Naive thymus-derived CD4-positive, alpha-beta T cell (primary cell): ENCODE measurements at regions of chr10 and their contacts with region 1.

Region 1: DNA sequence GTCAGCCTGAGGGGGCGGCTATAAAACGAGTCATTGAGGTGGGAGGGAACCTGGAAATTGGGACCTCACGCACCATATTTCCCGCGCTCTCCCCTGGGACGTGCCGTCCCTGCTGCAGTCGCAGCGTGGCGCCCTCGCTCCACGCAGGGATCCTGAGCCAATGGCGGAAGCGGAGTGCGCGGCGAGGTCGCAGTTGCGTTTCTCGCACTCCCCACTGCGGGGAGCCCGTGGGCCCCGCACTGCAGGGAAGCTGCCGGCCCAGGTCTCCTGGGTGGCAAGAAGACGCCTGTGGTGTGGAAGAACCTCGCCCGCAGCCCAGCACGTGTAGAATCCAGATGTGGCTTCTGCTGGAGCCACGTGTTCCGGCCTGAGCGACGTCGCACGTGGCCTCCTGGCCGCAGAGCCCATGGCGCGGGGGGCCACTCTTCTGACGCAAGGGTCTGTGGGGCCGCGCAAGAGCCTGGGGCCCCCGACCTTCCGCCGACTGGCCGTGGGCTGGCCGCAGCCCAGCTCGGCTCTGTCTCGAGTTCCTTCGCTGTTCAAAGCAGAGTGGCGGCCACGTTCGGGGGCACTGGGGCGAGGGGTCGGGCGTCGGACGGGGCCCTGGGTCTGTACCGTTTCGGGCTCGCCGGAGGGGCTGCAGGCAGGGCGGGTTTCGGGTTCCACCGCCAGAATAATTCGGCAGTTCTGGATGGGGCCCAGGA is 26.4 kb downstream of the HIF1AN start:
- DNase-seq: peak; percentile 70 to 83 (median 80)
- ATAC-seq: peak; percentile 99
- H3K4me3 ChIP-seq: peak overlapping the region; percentile 25
- H3K4me3 Mint-ChIP-seq: peak overlapping the region; percentile 46 to 78 (median 70)
- H3K27ac ChIP-seq: no peak overlapping the region
- H3K27ac Mint-ChIP-seq: no peak overlapping the region
- H3K4me1 ChIP-seq: peaks cover 5 to 7% of the 10 kb centered on the region in 2 donors
- H3K4me1 Mint-ChIP-seq: peaks cover 0 to 28% (median 11%) of the 10 kb centered on the region in 7 donors
- H3K27me3 ChIP-seq: no peaks in the 10 kb centered on the region
- H3K27me3 Mint-ChIP-seq: peaks cover 17 to 41% (median 25%) of the 10 kb centered on the region in 5 donors

Region 2: DNA sequence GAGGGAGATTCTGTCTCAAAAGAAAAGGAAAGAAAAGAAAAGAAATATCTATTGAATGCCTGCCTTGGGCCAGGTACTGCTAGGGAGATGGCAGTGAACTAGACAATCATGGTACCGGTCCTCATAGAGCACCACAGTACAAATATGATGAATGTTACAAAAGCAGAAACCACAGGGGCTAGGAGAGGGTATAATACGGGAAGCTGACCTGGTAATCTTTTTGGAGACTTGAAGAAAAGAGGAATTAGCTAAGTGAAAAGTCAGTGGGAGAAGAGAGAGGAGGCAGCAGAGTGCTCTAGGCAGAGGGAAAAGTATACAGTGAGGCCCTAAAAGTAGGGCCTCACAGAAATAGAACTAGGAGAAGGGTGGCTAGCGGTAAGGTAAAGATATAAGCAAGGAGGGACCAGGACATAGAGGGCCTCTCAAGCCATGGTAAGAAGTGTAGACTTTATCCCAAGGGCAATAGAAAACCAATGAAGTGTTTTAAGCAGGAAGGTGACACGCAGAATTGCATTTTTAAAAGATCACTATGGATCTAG is 142.2 kb before region 1 on chr10:
- CTCF ChIA-PET with region 1: no interaction called
- POLR2A ChIA-PET with region 1: no interaction called
- intact Hi-C with region 1: no loop called
- DNase-seq: no peak
- ATAC-seq: no peak
- H3K4me3 ChIP-seq: no peak overlapping the region
- H3K4me3 Mint-ChIP-seq: no peak overlapping the region
- H3K27ac ChIP-seq: no peak overlapping the region
- H3K27ac Mint-ChIP-seq: no peak overlapping the region
- H3K4me1 ChIP-seq: no peaks in the 10 kb centered on the region
- H3K4me1 Mint-ChIP-seq: peaks cover 0 to 6% (median 0%) of the 10 kb centered on the region in 7 donors
- H3K27me3 ChIP-seq: no peaks in the 10 kb centered on the region
- H3K27me3 Mint-ChIP-seq: peaks cover 0 to 11% (median 0%) of the 10 kb centered on the region in 5 donors

Region 3: DNA sequence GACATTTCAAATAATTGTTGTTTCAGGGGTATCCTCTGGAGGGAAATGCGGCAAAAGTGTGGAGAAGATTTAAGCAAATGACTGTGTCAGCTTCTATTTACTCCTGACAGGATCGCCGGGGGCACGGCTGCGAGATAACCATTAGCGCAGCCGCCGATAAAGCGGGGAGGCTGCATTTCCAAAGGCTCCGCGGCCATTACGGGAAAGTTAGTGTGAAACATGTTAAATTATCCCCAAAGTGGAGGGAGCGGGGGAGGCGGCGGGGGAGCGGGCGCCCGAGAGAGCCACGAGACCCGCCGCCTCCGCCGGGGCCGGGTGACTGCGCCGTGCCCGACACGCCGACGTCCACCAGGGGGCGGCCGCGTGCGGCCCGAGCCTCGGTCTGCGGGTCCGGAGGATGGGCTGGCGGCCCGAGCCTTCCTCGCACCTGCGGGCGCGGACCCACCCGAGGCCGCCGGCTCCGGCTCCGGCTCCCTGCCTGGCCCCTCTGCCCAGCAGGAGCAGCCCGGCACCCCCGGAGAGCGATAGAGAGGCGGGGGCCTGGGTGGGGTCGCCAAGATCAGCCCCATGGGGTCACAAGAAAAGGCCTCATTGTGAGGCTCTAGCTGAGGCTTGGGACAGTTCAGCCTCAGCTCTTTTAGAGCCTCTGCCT is 108.8 kb after region 1 on chr10:
- CTCF ChIA-PET with region 1: no interaction called
- POLR2A ChIA-PET with region 1: no interaction called
- intact Hi-C with region 1: loop called in 1 of 2 experiments (anchors 10 kb)
- DNase-seq: peak in 7 of 9 donors; percentile 31 to 83 (median 38)
- ATAC-seq: peak; percentile 75
- H3K4me3 ChIP-seq: no peak overlapping the region
- H3K4me3 Mint-ChIP-seq: peak overlapping the region in 7 of 10 donors; percentile 16 to 61 (median 36)
- H3K27ac ChIP-seq: no peak overlapping the region
- H3K27ac Mint-ChIP-seq: no peak overlapping the region
- H3K4me1 ChIP-seq: no peaks in the 10 kb centered on the region
- H3K4me1 Mint-ChIP-seq: peaks cover 4 to 13% (median 8%) of the 10 kb centered on the region in 7 donors
- H3K27me3 ChIP-seq: peaks cover 0 to 15% of the 10 kb centered on the region in 2 donors
- H3K27me3 Mint-ChIP-seq: peaks cover 61 to 72% (median 69%) of the 10 kb centered on the region in 5 donors

Region 4: GRCh38 chr10:100743626-100744135 is 181.5 kb after region 1 on chr10:
- CTCF ChIA-PET with region 1: interaction called, 7 read pairs
- POLR2A ChIA-PET with region 1: no interaction called
- intact Hi-C with region 1: loop called in 1 of 2 experiments (anchors 2 kb)
- DNase-seq: peak in 6 of 9 donors; percentile 41 to 48 (median 44)
- ATAC-seq: peak; percentile 72
- H3K4me3 ChIP-seq: no peak overlapping the region
- H3K4me3 Mint-ChIP-seq: peak overlapping the region; percentile 23 to 72 (median 58)
- H3K27ac ChIP-seq: no peak overlapping the region
- H3K27ac Mint-ChIP-seq: peak overlapping the region in 1 of 9 donors; percentile 61
- H3K4me1 ChIP-seq: peaks cover 4 to 17% of the 10 kb centered on the region in 2 donors
- H3K4me1 Mint-ChIP-seq: peaks cover 27 to 56% (median 36%) of the 10 kb centered on the region in 7 donors
- H3K27me3 ChIP-seq: peaks cover 10 to 27% of the 10 kb centered on the region in 2 donors
- H3K27me3 Mint-ChIP-seq: peaks cover 60 to 88% (median 66%) of the 10 kb centered on the region in 5 donors

Region 5: DNA sequence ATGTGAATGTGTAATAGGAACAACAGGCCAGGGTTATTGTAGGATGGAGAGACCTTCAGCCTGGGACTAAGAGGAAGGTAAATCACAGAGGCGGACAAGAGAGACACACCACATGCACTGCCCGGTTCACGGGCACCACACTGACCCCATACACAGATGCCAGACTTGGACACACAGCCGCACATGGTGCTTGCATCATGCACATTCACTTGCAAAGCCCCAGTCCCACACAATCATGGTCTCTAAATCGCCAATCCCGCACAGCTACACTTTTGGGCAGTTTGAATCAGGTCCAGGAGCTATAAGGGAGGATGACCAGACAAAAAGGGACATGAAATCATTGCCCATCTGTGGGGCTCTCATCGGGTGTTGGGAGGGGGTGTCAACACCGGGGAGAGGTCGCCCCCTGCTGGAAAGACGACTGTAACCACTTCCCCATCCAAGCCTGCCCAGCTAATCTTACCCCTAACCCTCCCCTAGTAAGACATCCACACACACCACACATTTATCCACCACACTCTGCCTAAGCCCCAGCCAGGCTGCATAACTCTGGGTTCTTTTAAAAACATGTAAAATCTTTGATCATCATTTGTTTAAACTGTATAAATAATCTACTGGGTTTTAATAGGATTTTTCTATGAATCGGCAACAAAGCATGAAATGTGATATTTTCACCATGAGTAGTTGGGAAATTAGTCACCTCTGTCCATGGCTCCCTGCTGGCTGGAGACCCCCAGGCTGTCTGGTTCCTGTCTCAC is 310.1 kb after region 1 on chr10:
- CTCF ChIA-PET with region 1: interaction called, 3 read pairs
- POLR2A ChIA-PET with region 1: no interaction called
- intact Hi-C with region 1: loop called in 1 of 2 experiments (anchors 1 kb)
- DNase-seq: peak in 7 of 9 donors; percentile 18 to 64 (median 27)
- ATAC-seq: peak; percentile 44
- H3K4me3 ChIP-seq: no peak overlapping the region
- H3K4me3 Mint-ChIP-seq: no peak overlapping the region
- H3K27ac ChIP-seq: no peak overlapping the region
- H3K27ac Mint-ChIP-seq: no peak overlapping the region
- H3K4me1 ChIP-seq: no peaks in the 10 kb centered on the region
- H3K4me1 Mint-ChIP-seq: peaks cover 0 to 5% (median 0%) of the 10 kb centered on the region in 7 donors
- H3K27me3 ChIP-seq: no peaks in the 10 kb centered on the region
- H3K27me3 Mint-ChIP-seq: peaks cover 2 to 19% (median 16%) of the 10 kb centered on the region in 5 donors

Region 6: DNA sequence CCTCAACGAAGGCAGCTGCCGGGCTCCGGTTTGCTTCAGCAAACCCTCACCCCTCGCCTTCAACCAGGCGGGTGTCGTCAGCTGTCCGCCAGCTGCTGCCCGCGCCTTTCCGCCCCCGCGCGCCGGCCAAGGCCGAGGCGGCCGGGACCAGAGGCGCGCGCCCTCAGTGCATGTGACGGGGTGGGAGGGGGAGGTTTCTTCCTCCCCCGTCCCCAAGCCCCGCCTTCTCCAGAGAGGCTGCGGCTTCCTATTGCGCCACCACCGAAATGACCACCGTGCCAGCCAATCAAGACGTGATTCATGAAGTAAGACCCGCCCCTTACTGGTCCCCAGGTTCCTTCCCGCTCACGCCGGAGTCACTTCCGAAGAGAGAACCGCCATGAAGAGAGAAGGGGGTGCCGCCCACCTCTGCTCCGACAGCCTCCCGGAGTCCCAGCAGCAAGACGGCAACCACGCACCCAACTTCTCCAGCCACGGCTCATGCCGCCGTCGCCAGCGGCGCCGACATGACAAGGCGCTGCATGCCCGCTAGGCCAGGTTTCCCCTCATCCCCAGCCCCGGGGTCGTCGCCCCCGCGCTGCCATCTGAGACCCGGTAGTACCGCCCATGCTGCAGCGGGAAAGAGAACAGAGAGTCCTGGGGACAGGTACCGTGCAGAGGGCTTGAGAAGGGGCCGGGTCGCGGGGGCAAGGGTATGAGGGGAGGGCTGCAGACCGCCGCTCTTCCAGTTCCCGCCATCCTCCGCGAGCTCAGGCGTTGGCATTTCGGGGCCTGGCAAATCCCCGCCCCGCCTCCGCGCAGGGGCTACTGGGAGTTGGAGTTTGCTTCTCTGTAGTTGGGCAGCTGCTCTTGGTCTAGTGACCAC is 350.7 kb after region 1 on chr10 and contains the start of gene SLF2:
- CTCF ChIA-PET with region 1: no interaction called
- POLR2A ChIA-PET with region 1: no interaction called
- intact Hi-C with region 1: loop called (anchors 1 kb)
- DNase-seq: peak; percentile 69 to 91 (median 88)
- ATAC-seq: peak; percentile 96
- H3K4me3 ChIP-seq: peak within 1 kb of the TSS; percentile 96
- H3K4me3 Mint-ChIP-seq: peak within 1 kb of the TSS; percentile 91 to 100 (median 99)
- H3K27ac ChIP-seq: peak within 1 kb of the TSS; percentile 89
- H3K27ac Mint-ChIP-seq: peak within 1 kb of the TSS; percentile 88 to 99 (median 97)
- H3K4me1 ChIP-seq: peaks cover 12 to 13% of the 10 kb centered on the region in 2 donors
- H3K4me1 Mint-ChIP-seq: peaks cover 22 to 63% (median 60%) of the 10 kb centered on the region in 7 donors
- H3K27me3 ChIP-seq: no peaks in the 10 kb centered on the region
- H3K27me3 Mint-ChIP-seq: no peaks in the 10 kb centered on the region
- total RNA-seq, gene SLF2: 20.1 to 43.7 (median 38.8) TPM

Region 7: GRCh38 chr10:101012525-101013364 is 450.6 kb after region 1 on chr10:
- CTCF ChIA-PET with region 1: interaction called, 3 read pairs
- POLR2A ChIA-PET with region 1: no interaction called
- intact Hi-C with region 1: loop called in 1 of 2 experiments (anchors 5 kb)
- DNase-seq: peak; percentile 46 to 76 (median 63)
- ATAC-seq: peak; percentile 91
- H3K4me3 ChIP-seq: no peak overlapping the region
- H3K4me3 Mint-ChIP-seq: peak overlapping the region in 1 of 10 donors; percentile 24
- H3K27ac ChIP-seq: no peak overlapping the region
- H3K27ac Mint-ChIP-seq: peak overlapping the region in 3 of 9 donors; percentile 8 to 75 (median 41)
- H3K4me1 ChIP-seq: peaks cover 0 to 5% of the 10 kb centered on the region in 2 donors
- H3K4me1 Mint-ChIP-seq: peaks cover 9 to 21% (median 17%) of the 10 kb centered on the region in 7 donors
- H3K27me3 ChIP-seq: no peaks in the 10 kb centered on the region
- H3K27me3 Mint-ChIP-seq: peaks cover 22 to 39% (median 30%) of the 10 kb centered on the region in 5 donors